Vagina (tissue), 2 donors: ENCODE measurements at regions of chr12 and their contacts with region 1.

Region 1: GRCh38 chr12:100356644-100357223 is at the start of gene SLC17A8:
- DNase-seq: no peak
- H3K4me3 ChIP-seq: no peak within 1 kb of the TSS
- H3K27ac ChIP-seq: no peak within 1 kb of the TSS
- H3K4me1 ChIP-seq: no peaks in the 10 kb centered on the region
- H3K27me3 ChIP-seq: no peaks in the 10 kb centered on the region
- CTCF ChIP-seq: no peak
- POLR2A ChIP-seq: no peak
- total RNA-seq, gene SLC17A8: not detected

Region 2: DNA sequence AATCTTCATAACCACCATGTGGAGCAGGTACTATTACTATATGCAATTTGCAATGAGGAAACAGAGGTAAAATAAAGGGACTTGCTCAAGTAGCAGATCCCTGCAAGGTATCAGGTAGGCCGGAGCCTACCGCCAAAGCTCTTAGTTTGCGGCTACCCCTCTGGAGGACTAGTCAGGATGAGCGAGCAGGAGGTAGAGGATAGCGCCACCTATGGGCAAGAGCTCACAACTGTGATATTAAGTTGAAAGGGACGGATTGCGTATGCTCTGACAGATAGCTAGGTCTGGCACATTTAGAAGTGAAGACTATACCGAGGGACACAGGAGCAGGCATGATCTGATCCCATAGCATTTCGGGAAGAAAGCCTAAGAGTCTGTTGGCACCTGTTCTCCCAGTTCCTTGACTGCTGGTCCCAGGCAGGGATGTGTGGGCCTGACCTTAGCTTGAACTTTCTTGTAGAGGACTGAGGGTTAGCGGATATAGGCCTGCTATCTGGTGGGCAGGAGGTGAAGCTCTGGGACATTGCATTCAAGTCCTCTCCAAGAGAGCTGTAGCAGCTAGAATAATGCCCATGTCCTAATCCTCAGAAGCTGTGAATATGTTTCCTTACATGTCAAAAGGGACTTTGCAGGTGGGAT is 48.2 kb after region 1 on chr12:
- intact Hi-C with region 1: no loop called
- DNase-seq: no peak
- H3K4me3 ChIP-seq: no peak overlapping the region
- H3K27ac ChIP-seq: no peak overlapping the region
- H3K4me1 ChIP-seq: no peaks in the 10 kb centered on the region
- H3K27me3 ChIP-seq: no peaks in the 10 kb centered on the region
- CTCF ChIP-seq: no peak
- POLR2A ChIP-seq: no peak

Region 3: DNA sequence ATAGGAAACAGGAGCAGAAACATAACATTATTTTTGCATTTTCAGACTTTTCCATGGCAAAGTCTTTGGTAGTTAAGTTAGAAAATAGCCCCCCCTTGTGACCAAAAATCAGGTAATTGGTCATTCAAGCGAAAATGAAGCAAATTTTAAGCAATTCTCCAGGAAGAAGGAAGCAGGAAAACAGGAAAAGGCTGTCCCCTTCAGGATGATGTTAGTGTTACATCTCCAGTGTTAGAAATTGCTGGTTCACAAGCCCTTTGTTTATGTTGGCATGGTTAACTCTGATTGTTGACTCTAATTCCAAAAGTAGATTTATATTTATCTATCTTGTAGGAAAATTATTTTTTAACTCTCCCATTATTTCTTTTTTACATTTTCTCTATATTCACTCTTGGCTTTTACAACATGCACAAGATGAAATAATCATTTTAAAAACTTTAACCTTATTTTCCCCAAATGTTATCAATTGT is 197.9 kb after region 1 on chr12:
- intact Hi-C with region 1: loop called (anchors 10 kb)
- DNase-seq: no peak
- H3K4me3 ChIP-seq: no peak overlapping the region
- H3K27ac ChIP-seq: no peak overlapping the region
- H3K4me1 ChIP-seq: peaks cover 5% of the 10 kb centered on the region
- H3K27me3 ChIP-seq: no peaks in the 10 kb centered on the region
- CTCF ChIP-seq: peak; percentile 46 to 81 (median 54)
- POLR2A ChIP-seq: no peak